ENCODE measurements at regions of chr11 and their contacts with region 1.

Region 1: GRCh38 chr11:69240332-69241074 is 53.5 kb upstream of the MYEOV start:
- DNase-seq: peak; percentile 69

Region 2: GRCh38 chr11:69670158-69670845 is 429.8 kb after region 1 on chr11:
- in situ Hi-C with region 1: loop called (anchors 25 kb)
- DNase-seq: peak; percentile 99